Stomach (tissue), 19 donors: ENCODE measurements at regions of chr10 and their contacts with region 1.

Region 1: GRCh38 chr10:101214446-101215396 is 14.5 kb downstream of the LBX1 start:
- DNase-seq: peak; percentile 65 to 87
- H3K4me3 ChIP-seq: peak overlapping the region in 1 of 4 donors; percentile 45
- H3K27ac ChIP-seq: no peak overlapping the region
- H3K4me1 ChIP-seq: peaks cover 37 to 49% (median 46%) of the 10 kb centered on the region in 4 donors
- H3K27me3 ChIP-seq: peaks cover 51 to 100% (median 91%) of the 10 kb centered on the region in 3 donors
- CTCF ChIP-seq: peak in 5 of 7 experiments; percentile 30 to 91 (median 82)
- EP300 ChIP-seq: no peak
- POLR2A ChIP-seq: no peak

Region 2: DNA sequence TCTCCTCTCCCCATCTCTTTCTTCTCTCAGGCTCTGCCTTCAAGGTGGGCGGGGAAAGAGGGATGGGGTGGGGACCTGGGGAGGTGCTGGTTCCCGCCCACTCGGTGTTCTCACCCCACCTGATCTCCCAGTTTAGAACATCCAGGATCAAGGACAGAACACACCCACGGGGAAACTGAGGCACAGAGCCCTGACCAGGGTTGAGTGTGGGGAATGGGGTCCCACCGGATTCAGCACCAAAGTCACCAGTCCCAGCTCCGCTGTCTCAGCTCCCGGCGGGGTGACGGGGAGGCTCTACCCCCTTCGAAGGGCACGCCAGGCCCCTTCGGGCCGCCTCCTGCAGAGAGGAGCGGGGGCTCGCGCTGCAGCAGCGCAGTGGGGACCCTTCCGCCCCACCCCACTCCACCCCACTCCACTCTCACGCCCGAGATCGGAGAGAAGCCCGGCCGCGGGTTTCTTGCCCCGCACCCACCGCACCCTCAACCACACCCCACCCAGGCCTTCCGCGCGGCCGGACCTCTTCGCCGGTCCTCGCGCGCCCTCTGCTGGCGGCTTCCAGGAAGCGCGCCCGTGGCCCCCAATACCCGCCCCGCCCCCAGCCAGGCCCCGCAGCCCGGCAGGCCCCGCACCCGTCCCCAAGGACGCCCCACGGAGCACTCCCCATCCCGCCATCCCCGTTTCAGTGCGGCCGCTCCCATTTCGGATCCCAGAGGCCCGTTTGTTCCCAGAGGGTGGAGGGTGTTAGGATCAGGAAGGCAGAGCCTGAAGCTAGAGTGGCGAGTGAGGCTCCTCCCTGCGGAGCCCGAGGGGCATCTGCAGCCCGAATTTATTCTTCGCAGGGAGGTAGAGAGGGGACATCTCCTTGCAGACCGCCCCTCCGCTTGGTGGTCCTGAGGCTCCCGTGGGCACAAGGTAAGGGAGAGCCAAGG is 355.4 kb after region 1 on chr10:
- intact Hi-C with region 1: loop called (anchors 5 kb)
- DNase-seq: peak; percentile 88 to 93
- H3K4me3 ChIP-seq: peak overlapping the region; percentile 50 to 63 (median 54)
- H3K27ac ChIP-seq: peak overlapping the region in 1 of 5 donors; percentile 36
- H3K4me1 ChIP-seq: peaks cover 25 to 31% (median 30%) of the 10 kb centered on the region in 4 donors
- H3K27me3 ChIP-seq: peaks cover 17 to 59% (median 42%) of the 10 kb centered on the region in 3 donors
- CTCF ChIP-seq: peak in 5 of 7 experiments; percentile 40 to 99 (median 94)
- EP300 ChIP-seq: no peak
- POLR2A ChIP-seq: no peak